Heart left ventricle (tissue), 16 donors: ENCODE measurements at regions of chr6 and their contacts with region 1.

Region 1: GRCh38 chr6:134253681-134254080 is 64.2 kb downstream of the SGK1 start:
- DNase-seq: no peak
- ATAC-seq: no peak
- H3K4me3 ChIP-seq: no peak overlapping the region
- H3K27ac ChIP-seq: no peak overlapping the region
- H3K4me1 ChIP-seq: peaks cover 0 to 26% (median 14%) of the 10 kb centered on the region in 12 donors
- H3K27me3 ChIP-seq: no peaks in the 10 kb centered on the region
- CTCF ChIP-seq: no peak
- POLR2A ChIP-seq: no peak

Region 2: GRCh38 chr6:134288538-134289203 is 35.0 kb after region 1 on chr6:
- intact Hi-C with region 1: loop called in 1 of 10 experiments (anchors 5 kb)
- DNase-seq: no peak
- ATAC-seq: peak in 3 of 4 donors; percentile 63 to 87 (median 72)
- H3K4me3 ChIP-seq: no peak overlapping the region
- H3K27ac ChIP-seq: peak overlapping the region in 8 of 12 donors; percentile 1 to 90 (median 40)
- H3K4me1 ChIP-seq: peaks cover 0 to 25% (median 8%) of the 10 kb centered on the region in 12 donors
- H3K27me3 ChIP-seq: no peaks in the 10 kb centered on the region
- CTCF ChIP-seq: no peak
- POLR2A ChIP-seq: no peak